MCF 10A (cell line): ENCODE measurements at regions of chr3 and their contacts with region 1.

Region 1: DNA sequence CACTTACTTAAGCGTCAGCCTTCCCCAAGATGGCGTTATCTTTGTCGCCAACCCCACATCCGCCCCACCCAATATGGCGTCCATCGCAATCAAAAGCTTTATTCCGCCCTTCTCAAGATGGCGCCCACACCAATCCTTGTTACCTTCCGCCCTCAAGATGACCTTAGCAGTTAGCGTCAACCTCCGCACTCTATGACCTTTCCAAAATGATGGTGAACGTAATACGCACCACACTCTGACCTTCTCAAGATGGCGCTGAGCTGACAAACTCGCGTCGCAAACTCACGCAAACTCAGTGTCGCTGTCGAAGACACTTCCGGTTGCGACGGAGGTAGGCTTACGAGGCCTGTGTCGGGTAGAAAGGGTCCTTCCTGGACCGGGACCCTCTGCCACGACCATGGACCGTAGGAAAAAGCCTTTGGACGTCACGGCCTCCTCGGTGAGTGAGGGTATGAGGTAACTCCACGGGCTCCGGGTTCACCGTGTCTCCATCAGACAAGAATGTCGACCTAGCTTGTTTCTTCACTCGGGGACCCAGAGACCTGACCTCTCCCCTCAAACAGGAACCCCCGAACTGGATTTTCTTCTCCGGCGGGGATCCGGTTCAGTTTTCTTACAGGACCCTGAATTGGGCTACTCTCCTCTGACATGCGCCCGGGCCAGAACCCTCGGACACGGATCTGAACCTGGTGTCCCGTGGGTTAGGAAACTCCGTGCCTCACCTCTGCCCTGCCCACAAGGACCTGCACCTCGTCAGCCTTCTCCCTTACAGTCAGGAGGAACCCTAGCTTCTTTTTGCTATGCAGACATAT is at the start of gene CCDC174:
- DNase-seq: peak; percentile 99
- H3K4me3 Mint-ChIP-seq: peak within 1 kb of the TSS; percentile 99
- H3K27ac Mint-ChIP-seq: peak within 1 kb of the TSS; percentile 99
- H3K4me1 Mint-ChIP-seq: peaks cover 12% of the 10 kb centered on the region
- H3K27me3 Mint-ChIP-seq: no peaks in the 10 kb centered on the region
- CTCF ChIP-seq: no peak
- total RNA-seq, gene CCDC174: 25.4 and 28.7 TPM in 2 replicates

Region 2: DNA sequence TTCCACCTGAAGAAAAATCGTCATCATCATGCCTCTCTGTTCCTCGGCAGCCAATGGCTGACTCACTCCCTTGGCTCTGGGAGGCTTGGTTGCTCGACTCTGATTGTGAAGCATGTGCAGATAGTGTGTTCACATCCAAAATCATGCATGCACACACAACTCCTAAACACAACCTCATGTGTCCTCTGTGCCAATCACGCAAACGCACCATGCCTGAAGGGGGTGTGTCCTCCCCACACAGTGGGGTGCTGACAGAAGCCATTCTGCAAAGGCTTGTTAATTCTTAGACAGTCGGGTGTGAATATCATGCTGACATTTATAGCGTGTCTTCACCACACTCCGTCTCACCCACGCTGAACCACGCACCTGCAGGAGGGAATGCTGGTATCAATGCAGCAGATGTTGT is 11.5 kb before region 1 on chr3:
- CTCF ChIA-PET with region 1: interaction called, 4 read pairs
- POLR2A ChIA-PET with region 1: interaction called, 15 read pairs
- intact Hi-C with region 1: no loop called
- DNase-seq: peak; percentile 43
- H3K4me3 Mint-ChIP-seq: no peak overlapping the region
- H3K27ac Mint-ChIP-seq: no peak overlapping the region
- H3K4me1 Mint-ChIP-seq: peaks cover 9% of the 10 kb centered on the region
- H3K27me3 Mint-ChIP-seq: peaks cover 42% of the 10 kb centered on the region
- CTCF ChIP-seq: no peak

Region 3: GRCh38 chr3:14947886-14948555 is 296.4 kb after region 1 on chr3:
- CTCF ChIA-PET with region 1: no interaction called
- POLR2A ChIA-PET with region 1: interaction called, 13 read pairs
- intact Hi-C with region 1: no loop called
- DNase-seq: peak; percentile 95
- H3K4me3 Mint-ChIP-seq: peak overlapping the region; percentile 99
- H3K27ac Mint-ChIP-seq: peak overlapping the region; percentile 99
- H3K4me1 Mint-ChIP-seq: peaks cover 24% of the 10 kb centered on the region
- H3K27me3 Mint-ChIP-seq: no peaks in the 10 kb centered on the region
- CTCF ChIP-seq: no peak

Region 4: DNA sequence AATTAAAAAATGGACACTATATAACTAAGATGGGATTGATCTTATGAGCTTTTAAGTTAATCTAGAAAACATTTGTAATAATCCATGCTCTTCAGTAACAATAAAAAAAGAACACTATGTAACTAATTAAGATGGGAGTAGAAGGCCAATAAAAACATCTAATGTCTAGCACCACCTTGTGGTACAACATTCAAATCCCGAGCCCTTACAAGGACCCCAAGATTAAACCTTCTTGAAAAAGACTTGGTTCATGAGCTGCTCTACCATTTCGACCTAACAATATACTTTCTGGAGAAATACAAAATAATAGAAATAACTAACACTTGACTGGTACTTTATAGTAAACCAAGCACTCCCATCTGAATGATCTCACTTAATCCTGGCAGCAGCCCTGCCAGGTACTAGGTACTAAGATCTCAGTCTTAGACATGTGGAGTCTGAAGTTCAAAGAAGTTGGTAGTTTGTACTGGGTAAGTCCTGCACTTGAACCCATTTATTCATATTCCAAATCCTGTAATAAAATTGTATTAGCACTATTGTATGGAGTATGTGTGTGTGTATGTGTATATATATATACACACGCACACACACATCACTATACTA is 753.9 kb after region 1 on chr3:
- CTCF ChIA-PET with region 1: no interaction called
- POLR2A ChIA-PET with region 1: no interaction called
- intact Hi-C with region 1: no loop called
- DNase-seq: peak; percentile 59
- H3K4me3 Mint-ChIP-seq: no peak overlapping the region
- H3K27ac Mint-ChIP-seq: no peak overlapping the region
- H3K4me1 Mint-ChIP-seq: no peaks in the 10 kb centered on the region
- H3K27me3 Mint-ChIP-seq: no peaks in the 10 kb centered on the region
- CTCF ChIP-seq: peak; percentile 57